ENCODE measurements at regions of chr1 and their contacts with region 1.

Region 1: GRCh38 chr1:233440951-233441401 is 113.5 kb downstream of the MAP3K21 start:
- DNase-seq: no peak
- ATAC-seq: no peak
- H3K4me3 ChIP-seq: no peak overlapping the region
- H3K27ac ChIP-seq: no peak overlapping the region
- H3K4me1 ChIP-seq: no peaks in the 10 kb centered on the region
- H3K27me3 ChIP-seq: peaks cover 0 to 3% (median 0%) of the 10 kb centered on the region in 3 donors
- CTCF ChIP-seq: no peak
- POLR2A ChIP-seq: no peak

Region 2: GRCh38 chr1:233790662-233791375 is 349.8 kb after region 1 on chr1:
- in situ Hi-C with region 1: loop called in 1 of 4 experiments (anchors 25 kb)
- intact Hi-C with region 1: no loop called
- DNase-seq: no peak
- ATAC-seq: no peak
- H3K4me3 ChIP-seq: no peak overlapping the region
- H3K27ac ChIP-seq: no peak overlapping the region
- H3K4me1 ChIP-seq: no peaks in the 10 kb centered on the region
- H3K27me3 ChIP-seq: no peaks in the 10 kb centered on the region
- CTCF ChIP-seq: peak; percentile 19 to 50 (median 43)
- POLR2A ChIP-seq: no peak

Region 3: GRCh38 chr1:233815865-233816264 is 374.9 kb after region 1 on chr1:
- in situ Hi-C with region 1: loop called in 1 of 4 experiments (anchors 25 kb)
- intact Hi-C with region 1: no loop called
- DNase-seq: no peak
- ATAC-seq: no peak
- H3K4me3 ChIP-seq: no peak overlapping the region
- H3K27ac ChIP-seq: no peak overlapping the region
- H3K4me1 ChIP-seq: no peaks in the 10 kb centered on the region
- H3K27me3 ChIP-seq: no peaks in the 10 kb centered on the region
- CTCF ChIP-seq: no peak
- POLR2A ChIP-seq: no peak

Measured in gastrocnemius medialis (tissue), 4 donors.